Activated CD8-positive, alpha-beta memory T cell treated with anti-CD3 and anti-CD28 coated beads, Interleukin-2, amount 10 ng/mL, durations not matched to agents 7 days and 5 days (primary cell): ENCODE measurements at regions of chr3 and their contacts with region 1.

Region 1: GRCh38 chr3:133487920-133488540 is 85.5 kb upstream of the CDV3 start:
- DNase-seq: peak; percentile 61
- ATAC-seq: no peak
- H3K4me3 Mint-ChIP-seq: no peak overlapping the region
- H3K27ac Mint-ChIP-seq: peak overlapping the region; percentile 60
- H3K4me1 Mint-ChIP-seq: peaks cover 56% of the 10 kb centered on the region
- H3K27me3 Mint-ChIP-seq: no peaks in the 10 kb centered on the region

Region 2: DNA sequence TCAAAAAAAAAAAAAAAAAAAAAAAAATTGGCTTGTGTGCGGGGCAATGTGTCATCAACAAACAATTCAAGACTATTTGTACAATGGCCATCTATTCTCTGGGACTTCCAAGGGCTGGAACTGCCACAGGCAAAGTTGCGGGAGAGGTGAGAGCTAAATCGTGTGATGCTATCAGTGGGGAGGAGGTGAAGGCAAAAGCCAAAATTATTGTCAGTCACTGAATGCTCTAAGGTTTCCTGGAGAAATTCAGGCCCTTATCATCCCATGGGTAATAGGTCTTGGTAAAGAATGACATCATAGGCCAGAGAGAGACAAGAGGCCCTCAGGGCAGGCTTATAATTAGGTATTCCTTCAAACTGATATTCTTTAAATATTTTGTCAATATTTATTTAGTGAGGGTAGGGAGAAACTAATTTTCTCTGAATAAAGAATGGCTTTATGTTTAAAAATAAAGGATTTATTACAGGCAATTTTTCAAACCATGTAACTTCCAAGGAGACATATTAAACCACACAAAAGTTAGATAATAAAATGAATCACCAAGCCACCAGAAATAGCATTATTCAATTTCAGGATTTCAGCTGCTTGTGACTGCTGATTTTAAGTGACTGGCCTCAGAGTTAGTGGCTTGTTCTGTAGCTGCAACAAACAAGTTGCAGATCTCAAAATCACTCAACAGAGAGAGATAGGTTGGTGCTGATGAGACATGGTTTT is 1759.0 kb before region 1 on chr3:
- CTCF ChIA-PET with region 1: no interaction called
- DNase-seq: no peak
- ATAC-seq: no peak
- H3K4me3 Mint-ChIP-seq: no peak overlapping the region
- H3K27ac Mint-ChIP-seq: no peak overlapping the region
- H3K4me1 Mint-ChIP-seq: peaks cover 1% of the 10 kb centered on the region
- H3K27me3 Mint-ChIP-seq: peaks cover 8% of the 10 kb centered on the region

Region 3: GRCh38 chr3:133466531-133467386 is 21.3 kb before region 1 on chr3:
- CTCF ChIA-PET with region 1: interaction called, 12 read pairs
- DNase-seq: no peak
- ATAC-seq: peak; percentile 40
- H3K4me3 Mint-ChIP-seq: no peak overlapping the region
- H3K27ac Mint-ChIP-seq: peak overlapping the region; percentile 5
- H3K4me1 Mint-ChIP-seq: peaks cover 32% of the 10 kb centered on the region
- H3K27me3 Mint-ChIP-seq: no peaks in the 10 kb centered on the region

Region 4: DNA sequence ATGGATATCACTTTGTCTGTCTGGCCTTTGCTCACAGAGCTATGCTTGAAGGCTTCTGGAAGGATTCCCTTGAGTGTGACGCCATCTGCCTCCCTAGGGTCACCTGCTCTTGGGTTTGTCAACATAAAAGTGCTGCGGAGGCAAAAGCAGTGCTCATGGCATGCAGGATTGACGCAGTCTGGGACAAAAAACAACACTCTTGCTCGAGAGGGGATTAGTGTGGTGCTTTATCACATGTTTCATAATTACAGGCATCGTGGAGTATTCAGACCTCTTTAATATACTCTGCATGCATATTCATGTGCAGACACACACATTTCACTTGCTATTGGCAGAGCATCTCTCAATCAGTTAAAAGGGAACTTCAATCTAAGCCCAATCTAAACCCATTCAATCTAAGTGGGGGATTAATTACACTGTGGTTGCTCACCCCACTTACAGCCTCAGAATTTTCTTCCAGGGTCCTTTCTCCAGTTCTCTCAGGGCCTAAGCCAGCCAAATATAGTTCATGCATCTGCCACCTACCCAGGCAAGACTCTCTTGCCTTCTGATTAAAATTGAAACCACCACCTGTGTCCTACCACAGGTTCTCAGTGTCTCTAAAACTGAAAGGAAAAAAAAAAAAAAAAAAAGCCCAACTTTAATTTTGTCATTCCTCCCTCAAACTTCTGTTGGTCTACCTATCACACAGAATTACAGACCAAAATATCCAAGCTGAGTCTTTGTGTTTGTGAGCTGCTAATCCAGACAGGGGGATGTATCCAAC is 12.6 kb before region 1 on chr3:
- CTCF ChIA-PET with region 1: interaction called, 38 read pairs
- DNase-seq: peak; percentile 62
- ATAC-seq: peak; percentile 98
- H3K4me3 Mint-ChIP-seq: no peak overlapping the region
- H3K27ac Mint-ChIP-seq: peak overlapping the region; percentile 71
- H3K4me1 Mint-ChIP-seq: peaks cover 50% of the 10 kb centered on the region
- H3K27me3 Mint-ChIP-seq: no peaks in the 10 kb centered on the region

Region 5: DNA sequence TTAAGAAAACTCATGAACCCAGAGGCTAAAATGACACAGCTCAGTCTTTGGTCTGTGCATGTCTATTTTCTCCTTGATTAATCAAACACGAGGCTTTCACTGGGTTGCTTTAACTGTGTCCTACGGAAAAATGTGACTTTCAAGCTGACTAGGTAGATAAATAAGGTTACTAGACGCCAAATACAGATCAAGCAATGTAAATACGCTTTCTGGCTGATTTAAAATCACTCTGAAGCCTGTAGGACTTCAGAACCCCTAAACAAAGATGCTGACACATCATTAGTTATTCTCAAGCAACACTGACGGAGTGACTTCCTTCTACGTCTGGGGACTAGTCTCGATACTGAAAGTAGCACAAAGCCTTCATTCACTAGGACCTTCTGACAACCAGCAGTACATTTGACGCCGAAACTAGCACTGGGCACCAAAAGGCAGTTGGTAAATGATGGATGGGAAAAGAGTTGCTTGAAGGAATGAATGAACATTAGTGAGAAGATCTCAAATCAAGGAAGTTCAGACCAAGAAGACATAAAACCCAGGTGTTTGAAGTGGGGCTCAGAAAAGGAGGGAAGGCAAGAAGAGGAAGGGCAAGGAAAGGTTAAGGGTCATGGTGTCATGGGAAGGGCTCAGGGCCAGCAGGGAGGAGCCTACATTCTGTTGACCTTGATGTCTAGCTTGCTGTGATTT is 18.3 kb after region 1 on chr3:
- CTCF ChIA-PET with region 1: interaction called, 12 read pairs
- DNase-seq: peak; percentile 62
- ATAC-seq: peak; percentile 99
- H3K4me3 Mint-ChIP-seq: peak overlapping the region; percentile 51
- H3K27ac Mint-ChIP-seq: peak overlapping the region; percentile 89
- H3K4me1 Mint-ChIP-seq: peaks cover 17% of the 10 kb centered on the region
- H3K27me3 Mint-ChIP-seq: no peaks in the 10 kb centered on the region

Region 6: GRCh38 chr3:133573054-133573628 is 85.1 kb after region 1 on chr3:
- CTCF ChIA-PET with region 1: interaction called, 100 read pairs
- DNase-seq: peak; percentile 100
- ATAC-seq: peak; percentile 82
- H3K4me3 Mint-ChIP-seq: peak overlapping the region; percentile 78
- H3K27ac Mint-ChIP-seq: peak overlapping the region; percentile 100
- H3K4me1 Mint-ChIP-seq: peaks cover 43% of the 10 kb centered on the region
- H3K27me3 Mint-ChIP-seq: no peaks in the 10 kb centered on the region